ENCODE measurements at regions of chr9 and their contacts with region 1.

Region 1: DNA sequence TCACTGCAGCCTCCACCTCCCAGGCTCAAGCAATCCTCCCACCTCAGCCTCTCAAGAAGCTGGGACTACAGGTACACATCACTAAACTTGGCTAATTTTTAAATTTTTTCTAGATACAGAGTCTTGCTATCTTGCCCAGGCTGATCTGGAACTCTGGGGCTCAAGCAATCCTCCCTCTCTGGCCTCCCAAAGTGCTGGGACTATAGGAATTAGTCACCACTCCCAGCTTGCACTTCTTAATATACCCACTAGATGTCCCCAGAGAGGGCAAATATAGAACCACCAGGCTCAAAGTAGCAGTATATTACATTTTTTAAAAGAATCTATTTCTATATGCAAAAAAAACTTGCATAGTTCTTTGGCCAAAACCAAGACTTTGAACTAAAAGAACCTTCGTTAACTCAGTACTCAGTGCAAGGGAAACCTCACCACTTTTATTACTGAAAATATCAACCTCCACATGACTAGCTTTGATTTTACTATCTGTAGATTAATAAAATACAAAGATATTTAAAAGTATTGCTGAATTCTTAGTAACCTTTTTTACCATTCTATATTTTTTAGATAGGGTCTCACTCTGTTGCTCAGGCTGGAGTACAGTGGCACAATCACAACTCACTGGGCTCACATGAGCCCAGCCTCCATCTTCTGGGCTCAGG is 25.8 kb upstream of the HSD17B3 start:
- DNase-seq: peak; percentile 74
- H3K4me3 ChIP-seq: no peak overlapping the region
- H3K27ac ChIP-seq: no peak overlapping the region
- H3K4me1 ChIP-seq: peaks cover 7% of the 10 kb centered on the region
- H3K27me3 ChIP-seq: no peaks in the 10 kb centered on the region
- CTCF ChIP-seq: peak; percentile 63 to 69
- POLR2A ChIP-seq: no peak

Region 2: DNA sequence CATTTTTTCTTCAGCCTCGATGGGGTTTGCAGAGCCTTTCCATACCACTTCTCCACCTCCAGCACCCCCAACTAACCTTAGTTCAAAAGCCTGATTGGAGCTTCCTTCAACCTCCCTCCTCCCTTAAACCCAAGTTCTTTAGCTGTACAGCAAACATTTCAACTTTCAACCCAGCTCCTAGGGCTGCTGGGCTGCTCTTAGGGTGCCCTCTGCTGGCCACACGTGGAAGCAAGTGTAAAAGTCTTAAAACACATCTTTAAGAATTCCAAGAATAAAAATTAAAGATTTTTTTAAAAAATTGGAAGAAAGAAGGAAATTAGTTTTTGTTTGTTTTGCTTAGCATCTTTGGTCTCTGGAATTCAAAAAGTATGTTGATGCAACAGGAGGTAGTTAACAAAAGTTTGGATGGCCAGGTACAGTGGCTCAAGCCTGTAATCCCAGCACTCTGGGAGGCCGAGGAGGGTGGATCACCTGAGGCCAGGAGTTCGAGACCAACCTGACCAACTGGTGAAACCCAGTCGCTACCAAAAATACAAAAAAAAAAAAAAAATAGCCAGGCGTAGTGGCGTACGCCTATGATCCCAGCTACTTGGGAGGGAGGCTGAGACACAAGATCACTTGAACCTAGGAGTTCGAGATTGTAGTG is 10.4 kb before region 1 on chr9:
- CTCF ChIA-PET with region 1: interaction called, 25 read pairs
- POLR2A ChIA-PET with region 1: no interaction called
- dilution Hi-C with region 1: no loop called
- intact Hi-C with region 1: no loop called
- DNase-seq: peak; percentile 57
- H3K4me3 ChIP-seq: no peak overlapping the region
- H3K27ac ChIP-seq: no peak overlapping the region
- H3K4me1 ChIP-seq: no peaks in the 10 kb centered on the region
- H3K27me3 ChIP-seq: no peaks in the 10 kb centered on the region
- CTCF ChIP-seq: peak; percentile 69 to 85
- POLR2A ChIP-seq: no peak

Region 3: DNA sequence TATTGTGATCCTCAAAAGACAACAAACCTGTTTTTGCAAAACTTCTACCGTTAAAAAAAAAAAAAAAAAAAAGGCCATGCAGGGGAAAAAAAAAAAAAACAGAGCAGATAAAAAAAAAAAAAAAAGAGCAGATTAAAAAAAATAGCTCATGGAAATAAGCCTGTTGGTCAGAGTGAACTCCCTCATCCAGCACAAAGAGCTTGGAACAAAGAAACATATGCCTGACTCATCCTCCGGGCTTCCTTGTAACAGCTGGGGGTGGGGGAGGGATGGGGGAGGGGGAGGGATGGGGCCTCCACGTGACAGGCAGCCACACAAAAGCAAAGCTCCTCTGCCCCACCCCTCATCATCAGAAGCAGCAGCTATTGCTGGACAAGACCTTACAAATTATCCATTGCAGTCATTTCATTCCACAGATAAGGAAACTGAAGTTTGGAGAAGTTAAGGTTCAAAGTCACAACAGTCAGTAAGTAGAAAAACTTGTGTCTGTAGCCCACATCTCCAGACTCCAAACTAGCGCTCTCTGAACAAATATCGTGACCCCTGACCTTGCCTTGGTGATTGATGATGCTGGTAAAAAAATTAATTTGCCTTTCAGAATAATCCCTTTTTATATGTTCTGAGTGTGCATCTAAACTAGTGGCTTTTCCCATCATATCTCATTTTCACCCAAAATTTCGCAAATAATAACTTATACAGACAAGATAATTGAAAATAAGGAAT is 16.8 kb after region 1 on chr9:
- CTCF ChIA-PET with region 1: interaction called, 43 read pairs
- POLR2A ChIA-PET with region 1: no interaction called
- dilution Hi-C with region 1: no loop called
- intact Hi-C with region 1: no loop called
- DNase-seq: peak; percentile 83
- H3K4me3 ChIP-seq: no peak overlapping the region
- H3K27ac ChIP-seq: peak overlapping the region; percentile 51
- H3K4me1 ChIP-seq: peaks cover 18% of the 10 kb centered on the region
- H3K27me3 ChIP-seq: no peaks in the 10 kb centered on the region
- CTCF ChIP-seq: no peak
- POLR2A ChIP-seq: no peak

Region 4: DNA sequence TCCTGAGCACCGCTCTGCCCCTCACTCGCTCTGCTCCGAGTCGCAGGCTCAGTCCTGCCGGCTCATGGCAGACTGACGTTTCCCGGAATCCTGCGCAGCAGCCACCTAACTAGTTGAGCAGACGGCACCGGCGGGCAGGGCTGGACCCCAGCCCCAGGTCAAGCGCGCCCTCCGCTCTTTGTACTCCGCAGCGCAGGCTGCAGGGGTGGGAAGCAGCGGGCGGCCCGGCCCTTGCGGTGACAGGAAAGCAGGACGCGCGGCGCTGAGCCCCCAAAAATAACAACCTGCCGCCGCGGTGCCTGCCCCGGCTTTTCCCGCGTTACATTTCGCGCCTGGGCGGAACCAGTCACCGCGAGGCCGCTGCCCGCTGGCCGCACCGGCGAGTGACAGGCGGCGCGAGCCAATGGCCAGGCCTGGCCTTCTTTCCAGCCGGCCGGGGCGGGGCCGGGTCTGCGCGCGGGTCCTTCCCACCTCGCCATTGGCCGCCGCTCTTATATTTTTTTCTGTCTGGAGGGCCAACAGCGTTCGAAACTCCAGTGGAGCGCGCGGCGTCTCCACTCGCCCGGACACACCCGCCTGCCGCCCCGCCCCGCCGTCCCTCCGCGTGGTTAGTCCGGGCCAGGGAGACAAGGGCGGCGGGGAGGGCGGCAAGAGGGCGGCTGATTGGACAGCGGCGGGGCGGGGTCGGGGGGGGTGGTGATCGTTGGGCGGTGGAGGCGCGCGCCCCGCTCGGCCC is 90.4 kb after region 1 on chr9 and contains the start of gene ZNF367:
- CTCF ChIA-PET with region 1: interaction called, 11 read pairs
- POLR2A ChIA-PET with region 1: no interaction called
- dilution Hi-C with region 1: no loop called
- intact Hi-C with region 1: loop called (anchors 1 kb)
- DNase-seq: peak; percentile 98
- H3K4me3 ChIP-seq: peak within 1 kb of the TSS; percentile 75 to 84 (median 83)
- H3K27ac ChIP-seq: peak within 1 kb of the TSS; percentile 92
- H3K4me1 ChIP-seq: peaks cover 27% of the 10 kb centered on the region
- H3K27me3 ChIP-seq: no peaks in the 10 kb centered on the region
- CTCF ChIP-seq: no peak
- POLR2A ChIP-seq: peak; percentile 15
- total RNA-seq, gene ZNF367: 8.6 and 10.0 TPM in 2 replicates

Region 5: GRCh38 chr9:96449845-96450612 is 122.2 kb after region 1 on chr9 and contains the start of gene HABP4:
- CTCF ChIA-PET with region 1: interaction called, 34 read pairs
- POLR2A ChIA-PET with region 1: no interaction called
- dilution Hi-C with region 1: no loop called
- intact Hi-C with region 1: loop called (anchors 1 kb)
- DNase-seq: peak; percentile 93
- H3K4me3 ChIP-seq: peak within 1 kb of the TSS; percentile 50 to 66 (median 63)
- H3K27ac ChIP-seq: peak within 1 kb of the TSS; percentile 65
- H3K4me1 ChIP-seq: peaks cover 7% of the 10 kb centered on the region
- H3K27me3 ChIP-seq: peaks cover 0 to 2% of the 10 kb centered on the region in 2 experiments
- CTCF ChIP-seq: no peak
- POLR2A ChIP-seq: peak; percentile 54
- total RNA-seq, gene HABP4: 11.1 and 11.7 TPM in 2 replicates

Region 6: GRCh38 chr9:96661711-96662110 is 333.9 kb after region 1 on chr9:
- CTCF ChIA-PET with region 1: interaction called, 84 read pairs
- POLR2A ChIA-PET with region 1: no interaction called
- dilution Hi-C with region 1: no loop called
- intact Hi-C with region 1: no loop called
- DNase-seq: no peak
- H3K4me3 ChIP-seq: no peak overlapping the region
- H3K27ac ChIP-seq: no peak overlapping the region
- H3K4me1 ChIP-seq: no peaks in the 10 kb centered on the region
- H3K27me3 ChIP-seq: peaks cover 0 to 2% of the 10 kb centered on the region in 2 experiments
- CTCF ChIP-seq: no peak
- POLR2A ChIP-seq: no peak